Endothelial cell of umbilical vein (primary cell): ENCODE measurements at regions of chr18 and their contacts with region 1.

Region 1: DNA sequence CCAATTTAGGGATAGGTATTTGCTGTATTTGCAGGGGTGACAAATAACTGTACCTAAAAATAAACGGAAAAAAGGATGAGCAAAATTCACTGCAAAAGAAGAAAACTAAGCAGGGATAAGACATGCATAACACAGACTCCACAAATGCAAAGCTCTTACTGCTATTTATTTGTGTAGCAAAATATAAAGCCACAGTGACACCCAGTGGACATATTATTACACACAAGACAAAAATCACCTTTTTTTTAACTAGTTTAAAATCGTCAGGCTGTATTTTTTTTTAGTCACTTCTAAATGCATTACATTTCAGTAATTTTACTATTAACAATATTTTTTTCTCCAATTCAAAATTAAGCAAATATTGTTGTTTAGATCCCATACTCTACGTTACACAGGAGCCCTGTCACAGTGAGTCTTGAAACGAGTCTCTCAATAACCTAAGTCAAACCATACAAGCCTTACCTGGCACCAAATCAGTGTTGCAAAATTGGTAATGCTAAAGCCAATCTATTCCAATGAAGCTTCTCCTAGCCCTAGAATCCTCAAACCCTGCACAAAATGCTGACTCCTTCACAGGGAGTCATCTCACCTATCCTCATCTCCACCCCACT is 23.7 kb downstream of the METTL4 start:
- DNase-seq: peak; percentile 60
- H3K4me3 ChIP-seq: no peak overlapping the region
- H3K27ac ChIP-seq: no peak overlapping the region
- H3K4me1 ChIP-seq: no peaks in the 10 kb centered on the region
- H3K27me3 ChIP-seq: no peaks in the 10 kb centered on the region
- CTCF ChIP-seq: peak; percentile 6 to 28
- POLR2A ChIP-seq: no peak

Region 2: DNA sequence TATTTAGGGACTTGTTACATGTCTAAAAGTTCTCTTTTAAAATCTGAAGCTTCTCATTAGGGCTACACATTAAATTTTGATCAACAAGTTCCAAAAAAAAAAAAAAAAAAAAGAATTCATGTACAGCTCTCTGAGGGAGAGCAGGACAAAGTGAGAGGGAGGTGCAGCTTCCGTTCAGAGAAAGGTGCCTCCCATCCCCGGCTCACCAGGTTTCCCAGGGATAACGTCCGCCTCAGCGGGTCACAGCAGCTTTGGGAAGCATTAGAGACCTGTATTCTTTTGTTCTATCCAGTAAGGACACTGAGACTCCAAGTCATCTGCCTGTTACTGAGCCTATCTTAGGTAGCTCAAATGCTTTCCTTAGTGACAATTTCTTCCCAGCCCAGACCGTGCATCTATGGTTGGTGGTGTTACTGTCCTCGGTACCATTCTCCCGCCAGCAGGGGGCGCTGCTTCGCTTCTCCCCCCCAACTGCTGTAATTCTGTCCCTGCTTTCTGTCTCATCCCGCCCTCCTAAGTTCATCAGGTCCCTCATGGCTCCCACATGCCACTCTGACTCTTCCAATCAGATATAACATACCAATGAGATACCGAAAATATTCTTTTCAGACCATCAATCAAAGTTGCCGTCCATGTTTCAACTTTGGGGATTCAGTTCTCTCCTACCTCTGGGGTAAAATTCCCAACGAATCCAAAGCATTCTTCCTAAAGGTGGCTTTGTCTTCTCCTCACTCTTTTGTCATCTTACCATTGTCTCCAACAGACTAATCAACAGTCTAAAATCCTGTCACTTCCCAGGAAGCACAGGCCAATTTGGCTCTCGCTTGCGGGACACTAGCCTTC is 442.7 kb before region 1 on chr18:
- CTCF ChIA-PET with region 1: interaction called, 259 read pairs
- POLR2A ChIA-PET with region 1: no interaction called
- dilution Hi-C with region 1: no loop called
- intact Hi-C with region 1: loop called (anchors 1 kb)
- DNase-seq: peak; percentile 58
- H3K4me3 ChIP-seq: no peak overlapping the region
- H3K27ac ChIP-seq: no peak overlapping the region
- H3K4me1 ChIP-seq: no peaks in the 10 kb centered on the region
- H3K27me3 ChIP-seq: peaks cover 0 to 2% of the 10 kb centered on the region in 2 experiments
- CTCF ChIP-seq: peak; percentile 75 to 87
- POLR2A ChIP-seq: no peak

Region 3: GRCh38 chr18:2223849-2224248 is 323.7 kb before region 1 on chr18:
- CTCF ChIA-PET with region 1: interaction called, 13 read pairs
- POLR2A ChIA-PET with region 1: no interaction called
- dilution Hi-C with region 1: no loop called
- intact Hi-C with region 1: loop called (anchors 5 kb)
- DNase-seq: peak; percentile 65
- H3K4me3 ChIP-seq: peak overlapping the region in 2 of 3 experiments; percentile 19
- H3K27ac ChIP-seq: no peak overlapping the region
- H3K4me1 ChIP-seq: peaks cover 3% of the 10 kb centered on the region
- H3K27me3 ChIP-seq: no peaks in the 10 kb centered on the region
- CTCF ChIP-seq: peak in 1 of 2 donors; percentile 38
- POLR2A ChIP-seq: no peak

Region 4: GRCh38 chr18:2337552-2338141 is 209.9 kb before region 1 on chr18:
- CTCF ChIA-PET with region 1: interaction called, 59 read pairs
- POLR2A ChIA-PET with region 1: no interaction called
- dilution Hi-C with region 1: no loop called
- intact Hi-C with region 1: loop called (anchors 1 kb)
- DNase-seq: peak; percentile 27
- H3K4me3 ChIP-seq: no peak overlapping the region
- H3K27ac ChIP-seq: no peak overlapping the region
- H3K4me1 ChIP-seq: no peaks in the 10 kb centered on the region
- H3K27me3 ChIP-seq: peaks cover 2 to 4% of the 10 kb centered on the region in 2 experiments
- CTCF ChIP-seq: peak; percentile 46 to 57
- POLR2A ChIP-seq: no peak

Region 5: GRCh38 chr18:2448565-2449151 is 98.9 kb before region 1 on chr18:
- CTCF ChIA-PET with region 1: no interaction called
- POLR2A ChIA-PET with region 1: no interaction called
- dilution Hi-C with region 1: no loop called
- intact Hi-C with region 1: no loop called
- DNase-seq: no peak
- H3K4me3 ChIP-seq: no peak overlapping the region
- H3K27ac ChIP-seq: no peak overlapping the region
- H3K4me1 ChIP-seq: no peaks in the 10 kb centered on the region
- H3K27me3 ChIP-seq: no peaks in the 10 kb centered on the region
- CTCF ChIP-seq: no peak
- POLR2A ChIP-seq: no peak

Region 6: DNA sequence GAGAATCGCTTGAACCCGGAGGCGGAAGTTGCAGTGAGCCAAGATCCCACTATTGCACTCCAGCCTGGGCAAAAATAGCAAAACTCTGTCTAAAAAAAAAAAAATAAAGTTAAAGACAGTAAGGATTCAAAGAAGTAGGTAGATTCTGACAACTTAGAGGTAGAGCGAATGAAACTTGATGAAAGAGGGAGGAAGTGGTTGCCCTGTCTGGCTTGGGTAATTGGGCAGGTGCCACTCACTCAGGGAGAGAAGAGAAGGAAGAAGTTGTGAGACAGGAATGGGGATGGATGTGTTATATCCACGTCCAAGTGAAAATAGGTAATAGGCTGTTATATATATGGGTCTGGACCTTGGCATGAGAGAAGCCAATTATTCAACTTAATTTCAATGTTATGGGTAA is 50.1 kb after region 1 on chr18:
- CTCF ChIA-PET with region 1: no interaction called
- POLR2A ChIA-PET with region 1: no interaction called
- dilution Hi-C with region 1: no loop called
- intact Hi-C with region 1: no loop called
- DNase-seq: no peak
- H3K4me3 ChIP-seq: no peak overlapping the region
- H3K27ac ChIP-seq: no peak overlapping the region
- H3K4me1 ChIP-seq: peaks cover 3% of the 10 kb centered on the region
- H3K27me3 ChIP-seq: no peaks in the 10 kb centered on the region
- CTCF ChIP-seq: no peak
- POLR2A ChIP-seq: no peak